Endothelial cell of umbilical vein (primary cell): ENCODE measurements at regions of chrX and their contacts with region 1.

Region 1: DNA sequence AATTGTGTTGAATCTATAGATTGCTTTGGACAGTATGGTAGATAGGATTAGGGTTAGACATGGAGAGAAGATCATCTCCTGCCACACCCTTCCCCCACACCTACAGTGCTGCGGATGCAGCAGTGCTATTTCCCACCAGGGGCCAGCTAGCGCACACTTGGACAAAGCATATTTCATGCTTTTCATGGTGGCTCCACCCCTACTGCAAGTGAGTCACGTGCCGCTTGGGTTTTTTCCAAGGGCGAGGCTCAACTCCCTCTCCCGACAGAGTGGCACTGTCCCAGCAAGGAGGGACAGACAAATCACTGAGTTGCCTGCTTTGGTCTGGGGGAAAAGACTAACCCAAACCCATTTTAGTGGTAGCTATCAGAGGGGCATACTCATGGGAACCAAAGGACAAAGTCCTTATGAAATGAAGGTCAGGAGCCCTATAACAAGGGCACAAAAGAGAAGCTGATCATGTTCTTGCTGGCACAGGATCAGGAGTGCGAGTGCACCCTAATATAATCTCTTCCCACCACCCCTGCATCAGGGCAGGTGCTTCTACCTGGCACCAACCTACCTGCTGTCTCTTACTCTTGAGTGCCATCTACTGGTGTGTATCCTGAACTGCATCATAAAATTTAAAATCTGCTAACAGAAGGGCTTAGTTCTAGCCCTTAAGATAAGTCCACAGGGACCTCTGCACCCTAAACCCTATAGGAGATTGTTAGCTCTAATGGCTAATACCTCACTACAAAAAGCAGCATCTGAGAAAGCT is 55.1 kb upstream of the PGAM4 start:
- DNase-seq: peak; percentile 16
- H3K4me3 ChIP-seq: no peak overlapping the region
- H3K27ac ChIP-seq: no peak overlapping the region
- H3K4me1 ChIP-seq: no peaks in the 10 kb centered on the region
- H3K27me3 ChIP-seq: no peaks in the 10 kb centered on the region
- CTCF ChIP-seq: peak; percentile 30 to 38
- POLR2A ChIP-seq: no peak

Region 2: GRCh38 chrX:76148753-76149152 is 1875.8 kb before region 1 on chrX:
- CTCF ChIA-PET with region 1: no interaction called
- POLR2A ChIA-PET with region 1: no interaction called
- dilution Hi-C with region 1: no loop called
- intact Hi-C with region 1: loop called (anchors 5 kb)
- DNase-seq: peak; percentile 52
- H3K4me3 ChIP-seq: peak overlapping the region in 1 of 3 experiments; percentile 46
- H3K27ac ChIP-seq: peak overlapping the region; percentile 42
- H3K4me1 ChIP-seq: peaks cover 21% of the 10 kb centered on the region
- H3K27me3 ChIP-seq: no peaks in the 10 kb centered on the region
- CTCF ChIP-seq: no peak
- POLR2A ChIP-seq: no peak